ENCODE measurements at regions of chr19 and their contacts with region 1.

Region 1: DNA sequence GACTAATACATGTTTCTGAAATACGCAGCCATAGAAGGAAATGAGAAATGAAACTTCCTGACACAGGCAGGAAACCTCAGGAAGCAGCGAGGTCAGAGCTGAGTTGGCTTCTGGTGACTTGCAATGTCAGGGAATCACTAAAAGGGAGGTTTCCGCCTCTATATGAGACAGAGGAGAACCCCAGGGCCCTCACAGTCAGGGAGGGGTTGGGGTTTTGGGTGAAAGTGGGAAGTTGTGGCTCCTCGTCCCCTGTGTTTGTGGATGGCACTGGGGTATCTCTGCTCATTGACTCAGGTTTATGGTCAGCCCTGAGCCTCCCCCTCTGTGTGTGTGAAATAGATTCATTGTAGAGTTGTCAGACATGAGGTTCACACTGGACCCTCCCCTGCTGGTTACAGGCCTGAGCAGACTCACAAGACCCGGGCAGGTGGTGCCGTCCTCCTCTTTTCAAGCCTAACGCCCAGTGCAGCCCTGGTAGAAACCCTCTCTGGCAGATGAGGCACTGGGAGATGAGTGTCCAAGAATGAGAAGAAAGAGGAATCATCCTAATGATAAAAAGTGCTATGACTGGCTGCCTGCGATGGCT is 5.5 kb upstream of the LILRA6 start:
- DNase-seq: peak; percentile 70
- ATAC-seq: peak; percentile 94
- H3K4me3 Mint-ChIP-seq: peak overlapping the region; percentile 3
- H3K27ac Mint-ChIP-seq: peak overlapping the region; percentile 13
- H3K4me1 Mint-ChIP-seq: peaks cover 13% of the 10 kb centered on the region
- H3K27me3 Mint-ChIP-seq: peaks cover 7% of the 10 kb centered on the region

Region 2: GRCh38 chr19:52734893-52735661 is 1513.0 kb before region 1 on chr19 and contains the start of gene ZNF611:
- CTCF ChIA-PET with region 1: no interaction called
- POLR2A ChIA-PET with region 1: no interaction called
- intact Hi-C with region 1: no loop called
- DNase-seq: peak; percentile 100
- ATAC-seq: peak; percentile 97
- H3K4me3 Mint-ChIP-seq: peak within 1 kb of the TSS; percentile 88
- H3K27ac Mint-ChIP-seq: peak within 1 kb of the TSS; percentile 89
- H3K4me1 Mint-ChIP-seq: peaks cover 24% of the 10 kb centered on the region
- H3K27me3 Mint-ChIP-seq: no peaks in the 10 kb centered on the region
- total RNA-seq, gene ZNF611: 20.6 to 22.9 TPM

Region 3: DNA sequence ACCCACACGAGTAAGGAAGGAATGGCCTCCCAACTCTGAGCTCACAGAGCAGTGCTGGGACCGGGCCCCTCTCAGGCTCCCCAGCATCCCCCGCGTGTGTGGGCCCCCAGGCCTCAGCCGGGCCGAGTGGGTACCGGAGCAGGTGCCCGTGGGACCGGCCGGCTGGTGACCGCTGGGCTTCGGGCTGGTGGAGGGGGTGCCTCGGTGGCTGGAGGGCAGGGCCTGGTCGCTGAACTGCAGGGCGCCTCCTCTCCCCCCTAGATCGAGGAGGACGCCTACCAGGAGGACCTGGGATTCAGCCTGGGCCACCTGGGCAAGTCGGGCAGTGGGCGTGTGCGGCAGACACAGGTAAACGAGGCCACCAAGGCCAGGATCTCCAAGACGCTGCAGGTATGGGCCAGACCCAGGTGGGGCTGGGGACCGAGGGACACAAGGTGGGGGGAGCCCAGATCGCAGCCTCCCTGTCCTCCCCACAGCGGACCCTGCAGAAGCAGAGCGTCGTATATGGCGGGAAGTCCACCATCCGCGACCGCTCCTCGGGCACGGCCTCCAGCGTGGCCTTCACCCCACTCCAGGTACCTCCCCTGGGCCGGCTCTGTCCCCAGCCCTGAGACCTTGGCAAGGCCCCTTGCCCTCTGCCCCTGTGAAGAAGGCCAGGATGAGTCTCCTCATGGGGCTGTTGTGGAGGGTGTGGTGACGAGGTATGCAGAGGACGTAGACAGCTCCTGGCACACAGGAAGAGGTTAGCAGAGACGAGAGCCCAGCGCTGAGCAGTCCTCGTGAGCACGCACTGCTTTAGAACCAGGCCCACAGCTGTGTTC is 119.1 kb before region 1 on chr19:
- CTCF ChIA-PET with region 1: no interaction called
- POLR2A ChIA-PET with region 1: no interaction called
- intact Hi-C with region 1: no loop called
- DNase-seq: no peak
- ATAC-seq: no peak
- H3K4me3 Mint-ChIP-seq: no peak overlapping the region
- H3K27ac Mint-ChIP-seq: no peak overlapping the region
- H3K4me1 Mint-ChIP-seq: no peaks in the 10 kb centered on the region
- H3K27me3 Mint-ChIP-seq: no peaks in the 10 kb centered on the region

Region 4: DNA sequence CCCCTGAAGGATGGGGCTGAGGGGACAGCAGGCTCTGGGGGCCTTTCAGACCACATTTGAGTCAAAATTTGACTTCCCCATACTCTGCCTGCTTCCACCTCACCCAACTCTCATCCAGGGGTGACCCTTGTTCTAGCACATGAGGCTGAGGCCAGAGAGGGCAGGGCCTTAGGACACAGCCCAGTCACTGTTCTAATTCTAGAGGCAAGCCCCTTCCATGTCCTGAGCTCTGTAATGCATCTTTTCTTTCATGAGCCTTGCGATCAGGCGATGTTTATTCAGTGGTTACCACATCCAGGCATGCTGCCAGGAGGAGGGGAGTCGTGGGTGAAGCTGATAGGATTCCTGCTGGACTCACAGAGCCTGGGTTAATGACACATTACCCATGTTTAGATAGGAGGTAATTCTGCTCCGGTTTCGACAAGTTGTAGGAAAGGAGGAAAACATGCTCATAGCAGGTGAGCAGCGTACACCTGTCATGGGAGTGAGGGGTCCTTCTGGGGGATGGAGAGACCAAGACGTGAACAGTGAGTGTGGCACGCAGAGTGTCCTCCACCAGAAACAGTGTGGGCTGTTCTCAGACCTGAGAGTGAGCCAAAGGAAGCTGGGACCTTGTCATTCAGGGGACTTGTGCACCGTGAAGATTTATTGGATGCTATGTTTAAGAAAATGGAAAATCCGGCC is 38.2 kb before region 1 on chr19:
- CTCF ChIA-PET with region 1: no interaction called
- POLR2A ChIA-PET with region 1: no interaction called
- intact Hi-C with region 1: loop called in 1 of 2 experiments (anchors 5 kb)
- DNase-seq: peak; percentile 48
- ATAC-seq: no peak
- H3K4me3 Mint-ChIP-seq: peak overlapping the region; percentile 4
- H3K27ac Mint-ChIP-seq: peak overlapping the region; percentile 59
- H3K4me1 Mint-ChIP-seq: peaks cover 64% of the 10 kb centered on the region
- H3K27me3 Mint-ChIP-seq: no peaks in the 10 kb centered on the region

Measured in activated CD4-positive, alpha-beta T cell treated with anti-CD3 and anti-CD28 coated beads for 36 hours (primary cell).